ENCODE measurements at regions of chr3 and their contacts with region 1.

Region 1: DNA sequence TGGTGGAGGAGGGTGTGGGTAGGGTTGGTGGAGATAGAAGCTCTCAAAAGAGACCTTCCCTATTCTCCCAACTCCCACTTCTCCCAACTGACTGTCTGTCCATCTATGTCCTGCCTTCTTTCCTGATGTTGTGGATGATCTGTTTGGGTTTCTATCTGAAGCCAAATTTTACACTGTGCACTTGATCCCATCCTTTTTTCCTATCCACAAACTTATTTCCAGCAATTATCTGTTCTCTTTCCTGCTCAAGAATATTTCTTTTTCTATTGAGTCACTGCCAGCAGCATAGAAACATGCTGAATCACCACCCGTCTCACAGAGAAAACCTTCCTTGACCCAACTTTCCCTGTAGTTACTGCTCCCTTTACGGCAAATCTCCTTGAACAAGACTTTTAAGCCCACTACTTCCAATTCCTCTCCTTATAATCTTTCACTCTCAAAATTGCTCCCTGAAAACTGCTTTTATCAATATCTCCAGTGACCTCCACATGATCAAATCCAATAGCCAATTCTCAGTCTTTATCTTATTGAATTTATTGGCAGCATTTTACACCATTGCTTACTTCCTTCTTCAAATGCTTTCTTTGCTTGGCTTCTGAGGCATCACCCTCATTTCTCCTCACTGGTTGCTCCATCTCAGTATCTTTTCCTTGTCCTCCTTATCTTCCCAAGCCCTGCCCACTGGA is 141.2 kb upstream of the SLC7A14 start:
- DNase-seq: no peak
- H3K4me3 ChIP-seq: peak overlapping the region; percentile 36
- CTCF ChIP-seq: no peak

Region 2: DNA sequence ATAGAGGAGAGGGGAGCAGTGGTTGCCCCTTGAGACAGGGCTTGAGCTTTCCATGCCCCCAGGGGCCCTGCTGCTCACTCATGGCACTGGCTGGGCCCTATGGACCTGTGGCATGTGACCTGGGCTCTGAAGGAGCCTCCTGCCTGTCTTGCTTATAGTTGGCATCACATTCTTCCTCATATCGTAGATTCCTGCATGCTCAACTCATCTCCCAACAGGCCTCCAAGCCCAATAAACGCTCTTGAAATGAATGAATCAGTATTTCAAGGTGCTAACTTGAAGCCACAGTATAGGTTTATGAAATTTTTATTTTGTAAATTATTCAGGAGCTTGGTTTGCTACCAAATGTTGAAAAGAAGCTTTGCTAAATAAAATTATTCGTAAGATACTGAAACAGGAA is 47.9 kb before region 1 on chr3:
- CTCF ChIA-PET with region 1: no interaction called
- POLR2A ChIA-PET with region 1: no interaction called
- DNase-seq: no peak
- H3K4me3 ChIP-seq: no peak overlapping the region
- CTCF ChIP-seq: no peak

Region 3: DNA sequence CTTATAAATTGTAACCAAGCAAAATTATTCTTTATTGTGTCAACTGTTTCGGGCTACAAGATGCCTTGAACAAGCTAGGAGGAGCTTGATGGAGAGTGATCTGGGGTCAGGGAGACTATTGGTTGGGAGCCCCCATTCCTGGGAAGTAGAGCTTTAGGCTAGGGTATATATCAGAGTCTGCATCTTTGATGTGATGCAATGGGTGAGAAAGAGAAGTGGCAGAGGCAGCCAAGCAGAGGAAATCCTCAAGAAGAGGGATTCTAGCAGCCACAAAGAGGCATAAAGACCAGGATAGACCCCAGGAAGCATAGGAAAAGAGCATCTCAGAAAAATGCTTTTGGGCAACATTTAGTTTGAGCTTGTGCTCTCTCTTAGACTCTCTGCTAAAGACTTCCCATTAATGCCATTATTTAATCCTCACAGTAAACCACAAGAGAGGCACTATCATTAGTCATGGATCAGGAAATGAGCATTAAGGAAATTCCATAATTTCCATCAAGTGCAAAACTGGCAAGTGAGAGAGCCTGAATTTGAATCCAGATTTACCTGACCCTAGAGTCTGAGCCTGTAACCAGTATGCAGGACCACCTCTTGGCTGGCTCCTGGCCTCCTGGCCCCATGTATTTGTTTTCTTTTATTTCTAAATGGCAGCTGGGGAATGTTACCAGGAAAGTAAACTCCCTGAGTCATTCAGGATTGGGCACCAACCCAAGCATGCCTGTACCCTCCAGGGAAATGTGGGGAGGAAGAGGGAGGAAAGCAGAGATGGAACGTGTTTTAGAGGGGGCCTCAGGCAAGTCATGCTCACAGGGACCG is 24.2 kb after region 1 on chr3:
- CTCF ChIA-PET with region 1: interaction called, 12 read pairs
- POLR2A ChIA-PET with region 1: interaction called, 5 read pairs
- DNase-seq: no peak
- H3K4me3 ChIP-seq: no peak overlapping the region
- CTCF ChIP-seq: no peak

Region 4: DNA sequence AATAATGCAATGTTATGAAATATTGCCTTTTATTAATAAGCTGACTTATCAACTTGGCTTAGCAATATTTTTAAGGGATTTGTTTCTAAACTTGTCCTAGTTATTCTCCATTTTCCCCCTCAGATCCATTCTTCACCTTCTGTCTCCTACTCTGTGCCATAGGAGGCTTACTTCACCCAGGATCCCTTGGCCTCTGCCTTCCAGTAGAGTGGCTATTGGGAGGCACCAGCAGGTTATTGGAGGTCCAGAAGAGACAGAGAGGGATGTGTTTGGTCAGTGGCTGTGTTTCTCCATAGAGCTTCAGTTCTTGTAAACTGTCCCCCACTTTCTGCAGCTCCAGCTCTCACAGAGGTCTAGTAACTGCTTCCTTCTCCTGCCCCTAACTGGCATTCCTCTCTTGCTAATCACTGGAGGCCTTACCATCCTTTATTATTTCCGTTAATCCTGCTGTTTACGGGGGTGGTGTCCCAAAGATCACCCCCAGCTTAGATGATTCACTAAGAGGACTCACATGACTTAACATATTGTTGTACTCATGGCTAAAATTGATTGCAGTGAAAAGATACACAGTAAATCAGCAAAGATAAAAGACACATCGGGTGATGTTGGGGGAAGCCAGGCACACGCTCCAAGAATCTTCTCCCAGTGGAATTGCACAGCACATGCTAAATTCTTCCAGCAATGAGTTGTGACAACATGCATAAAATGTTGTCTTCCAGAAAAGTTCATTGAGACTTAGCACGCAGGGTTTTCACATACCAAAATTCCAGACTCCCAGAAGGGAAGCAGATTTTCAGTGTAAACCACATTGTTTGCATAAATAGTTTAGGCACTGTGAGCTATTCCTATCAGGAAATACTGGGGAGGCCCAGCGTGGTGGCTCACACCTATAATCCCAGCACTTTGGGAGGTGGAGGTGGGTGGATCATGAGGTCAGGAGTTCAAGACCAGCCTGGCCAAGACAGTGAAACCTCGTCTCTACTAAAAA is 75.3 kb after region 1 on chr3:
- CTCF ChIA-PET with region 1: no interaction called
- POLR2A ChIA-PET with region 1: interaction called, 15 read pairs
- DNase-seq: peak; percentile 97
- H3K4me3 ChIP-seq: no peak overlapping the region
- CTCF ChIP-seq: no peak

Region 5: GRCh38 chr3:171284308-171285075 is 557.4 kb after region 1 on chr3:
- CTCF ChIA-PET with region 1: no interaction called
- POLR2A ChIA-PET with region 1: no interaction called
- DNase-seq: peak; percentile 82
- H3K4me3 ChIP-seq: no peak overlapping the region; the same call in 1 of the 2 replicates
- CTCF ChIP-seq: no peak

Region 6: DNA sequence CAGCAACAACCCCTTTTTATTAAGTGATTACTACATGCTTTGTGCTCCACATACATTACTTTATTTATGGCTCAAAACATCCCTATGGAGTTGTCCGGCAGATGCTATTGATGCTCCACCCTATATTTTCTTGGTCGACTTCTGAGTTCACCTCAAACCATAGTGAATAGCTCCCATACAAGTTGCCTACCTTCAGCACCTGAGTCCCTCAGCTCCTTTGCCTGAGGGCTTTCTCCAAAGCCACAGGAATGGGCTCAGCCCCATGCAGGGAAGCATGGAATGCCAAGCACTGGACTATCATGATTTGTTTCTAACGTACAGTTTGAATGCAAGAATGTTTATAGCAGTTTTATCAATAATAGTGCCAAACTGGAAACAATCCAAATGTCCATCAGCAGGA is 857.9 kb after region 1 on chr3:
- CTCF ChIA-PET with region 1: no interaction called
- POLR2A ChIA-PET with region 1: no interaction called
- DNase-seq: no peak
- H3K4me3 ChIP-seq: no peak overlapping the region
- CTCF ChIP-seq: no peak

Region 7: DNA sequence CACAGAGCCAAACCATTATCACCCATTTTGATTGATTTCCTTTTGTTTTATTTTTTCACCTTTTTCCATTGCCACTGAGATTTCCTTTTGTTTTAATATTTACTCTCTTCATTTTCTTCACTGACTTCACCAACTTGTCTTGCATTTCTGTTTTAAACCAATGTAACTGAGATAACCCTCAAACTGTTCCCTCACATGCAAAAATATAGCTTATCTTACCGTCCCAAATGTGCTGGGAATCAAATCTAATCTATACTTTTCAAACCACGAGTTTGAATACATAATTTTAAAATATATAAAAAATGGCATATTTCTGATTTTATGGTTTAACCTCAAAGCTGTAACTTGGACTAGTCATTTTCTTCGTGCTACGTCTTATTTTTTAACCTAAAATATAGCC is 939.4 kb after region 1 on chr3:
- CTCF ChIA-PET with region 1: no interaction called
- POLR2A ChIA-PET with region 1: no interaction called
- DNase-seq: no peak
- H3K4me3 ChIP-seq: no peak overlapping the region
- CTCF ChIP-seq: no peak

Measured in AG04449 (cell line).